ENCODE measurements at regions of chr3 and their contacts with region 1.

Region 1: GRCh38 chr3:43378066-43378935 is 92.0 kb downstream of the SNRK start:
- DNase-seq: peak; percentile 88
- ATAC-seq: peak; percentile 98
- H3K4me3 Mint-ChIP-seq: no peak overlapping the region
- H3K27ac Mint-ChIP-seq: no peak overlapping the region
- H3K4me1 Mint-ChIP-seq: peaks cover 18% of the 10 kb centered on the region
- H3K27me3 Mint-ChIP-seq: no peaks in the 10 kb centered on the region
- CTCF ChIP-seq: peak; percentile 84

Region 2: DNA sequence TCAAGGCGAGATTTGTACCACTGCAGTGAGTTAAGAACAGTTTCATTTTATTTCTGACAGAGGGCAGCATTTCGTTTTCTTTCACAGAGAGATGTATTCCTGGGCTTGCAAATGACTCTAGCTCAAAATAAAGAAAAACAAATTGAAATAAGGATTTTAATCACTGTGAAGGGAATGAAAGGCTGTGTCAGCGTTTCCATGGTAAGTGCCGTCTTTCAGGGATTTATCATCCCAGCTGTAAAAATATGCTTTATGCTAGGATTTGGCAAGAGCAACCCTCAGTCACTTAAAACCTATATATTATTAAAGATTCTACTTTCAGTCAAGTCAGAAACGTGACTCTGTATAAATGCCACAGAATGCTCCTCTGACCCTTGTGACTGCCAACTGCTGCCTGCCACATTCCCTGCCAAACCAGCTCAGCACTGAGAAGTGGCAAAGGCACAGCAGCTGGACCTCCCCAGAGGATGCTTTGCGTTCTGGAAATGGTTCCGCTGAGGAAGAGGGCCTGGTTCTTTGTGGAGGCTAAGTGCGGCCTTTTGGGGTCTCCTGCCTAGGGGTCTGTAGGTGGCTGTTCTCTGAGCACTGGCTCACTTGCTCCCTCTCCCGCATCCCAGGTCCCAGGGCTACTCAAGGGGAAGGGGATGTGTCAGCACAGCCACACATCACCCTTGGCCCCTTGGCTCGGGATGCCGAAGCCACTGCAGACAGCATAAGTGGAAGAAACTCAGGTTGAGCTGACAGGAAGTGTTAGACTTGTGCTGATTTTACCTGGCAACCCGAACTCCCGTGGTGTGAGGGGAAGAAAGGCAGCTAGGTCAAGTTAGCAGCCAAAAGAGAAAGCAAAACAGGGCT is 215.8 kb before region 1 on chr3:
- CTCF ChIA-PET with region 1: interaction called, 12 read pairs
- POLR2A ChIA-PET with region 1: no interaction called
- intact Hi-C with region 1: loop called (anchors 1 kb)
- DNase-seq: peak; percentile 49
- ATAC-seq: peak; percentile 75
- H3K4me3 Mint-ChIP-seq: peak overlapping the region; percentile 65
- H3K27ac Mint-ChIP-seq: peak overlapping the region; percentile 96
- H3K4me1 Mint-ChIP-seq: peaks cover 20% of the 10 kb centered on the region
- H3K27me3 Mint-ChIP-seq: no peaks in the 10 kb centered on the region
- CTCF ChIP-seq: peak; percentile 58

Region 3: DNA sequence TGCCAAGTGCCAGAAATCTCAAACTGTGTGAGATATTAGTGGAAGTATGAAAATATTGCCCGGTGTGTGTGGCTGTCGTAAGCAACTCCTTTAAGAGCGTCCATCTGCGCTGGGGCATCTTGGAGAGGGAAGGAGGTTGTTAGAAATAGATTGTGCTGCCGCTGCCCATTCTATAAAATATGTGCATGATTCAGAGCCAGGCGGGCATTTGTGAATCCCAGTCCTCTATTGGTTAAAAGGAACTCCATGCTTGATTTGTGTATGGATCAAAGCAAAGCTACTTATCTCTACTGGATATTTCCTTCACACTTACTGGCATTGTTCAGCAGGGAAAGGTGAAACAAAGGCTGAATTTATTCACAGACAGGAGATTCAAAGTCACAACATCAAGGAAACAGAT is 181.6 kb before region 1 on chr3:
- CTCF ChIA-PET with region 1: no interaction called
- POLR2A ChIA-PET with region 1: no interaction called
- intact Hi-C with region 1: no loop called
- DNase-seq: no peak
- ATAC-seq: no peak
- H3K4me3 Mint-ChIP-seq: no peak overlapping the region
- H3K27ac Mint-ChIP-seq: no peak overlapping the region
- H3K4me1 Mint-ChIP-seq: peaks cover 76% of the 10 kb centered on the region
- H3K27me3 Mint-ChIP-seq: no peaks in the 10 kb centered on the region
- CTCF ChIP-seq: no peak

Region 4: GRCh38 chr3:43215663-43216275 is 162.5 kb before region 1 on chr3:
- CTCF ChIA-PET with region 1: interaction called, 3 read pairs
- POLR2A ChIA-PET with region 1: no interaction called
- intact Hi-C with region 1: loop called (anchors 5 kb)
- DNase-seq: no peak
- ATAC-seq: peak; percentile 61
- H3K4me3 Mint-ChIP-seq: no peak overlapping the region
- H3K27ac Mint-ChIP-seq: no peak overlapping the region
- H3K4me1 Mint-ChIP-seq: peaks cover 31% of the 10 kb centered on the region
- H3K27me3 Mint-ChIP-seq: no peaks in the 10 kb centered on the region
- CTCF ChIP-seq: peak; percentile 39

Region 5: GRCh38 chr3:43223670-43224364 is 154.5 kb before region 1 on chr3:
- CTCF ChIA-PET with region 1: interaction called, 13 read pairs
- POLR2A ChIA-PET with region 1: no interaction called
- intact Hi-C with region 1: loop called (anchors 5 kb)
- DNase-seq: no peak
- ATAC-seq: peak; percentile 45
- H3K4me3 Mint-ChIP-seq: no peak overlapping the region
- H3K27ac Mint-ChIP-seq: peak overlapping the region; percentile 54
- H3K4me1 Mint-ChIP-seq: peaks cover 51% of the 10 kb centered on the region
- H3K27me3 Mint-ChIP-seq: no peaks in the 10 kb centered on the region
- CTCF ChIP-seq: peak; percentile 67

Region 6: GRCh38 chr3:43286115-43286840 is 92.0 kb before region 1 on chr3 and contains the start of gene SNRK:
- CTCF ChIA-PET with region 1: interaction called, 7 read pairs
- POLR2A ChIA-PET with region 1: no interaction called
- intact Hi-C with region 1: loop called (anchors 10 kb)
- DNase-seq: peak; percentile 89
- ATAC-seq: peak; percentile 83
- H3K4me3 Mint-ChIP-seq: peak within 1 kb of the TSS; percentile 92
- H3K27ac Mint-ChIP-seq: peak within 1 kb of the TSS; percentile 98
- H3K4me1 Mint-ChIP-seq: peaks cover 35% of the 10 kb centered on the region
- H3K27me3 Mint-ChIP-seq: no peaks in the 10 kb centered on the region
- CTCF ChIP-seq: peak; percentile 53
- total RNA-seq, gene SNRK: 28.9 to 29.2 TPM

Region 7: GRCh38 chr3:43389388-43390254 is 11.3 kb after region 1 on chr3:
- CTCF ChIA-PET with region 1: interaction called, 19 read pairs
- POLR2A ChIA-PET with region 1: interaction called, 3 read pairs
- intact Hi-C with region 1: no loop called
- DNase-seq: peak; percentile 85
- ATAC-seq: peak; percentile 93
- H3K4me3 Mint-ChIP-seq: peak overlapping the region; percentile 44
- H3K27ac Mint-ChIP-seq: peak overlapping the region; percentile 93
- H3K4me1 Mint-ChIP-seq: peaks cover 63% of the 10 kb centered on the region
- H3K27me3 Mint-ChIP-seq: no peaks in the 10 kb centered on the region
- CTCF ChIP-seq: no peak

Measured in activated CD8-positive, alpha-beta T cell treated with anti-CD3 and anti-CD28 coated beads for 36 hours (primary cell).